Caco-2 (cell line): ENCODE measurements at regions of chr3 and their contacts with region 1.

Region 1: DNA sequence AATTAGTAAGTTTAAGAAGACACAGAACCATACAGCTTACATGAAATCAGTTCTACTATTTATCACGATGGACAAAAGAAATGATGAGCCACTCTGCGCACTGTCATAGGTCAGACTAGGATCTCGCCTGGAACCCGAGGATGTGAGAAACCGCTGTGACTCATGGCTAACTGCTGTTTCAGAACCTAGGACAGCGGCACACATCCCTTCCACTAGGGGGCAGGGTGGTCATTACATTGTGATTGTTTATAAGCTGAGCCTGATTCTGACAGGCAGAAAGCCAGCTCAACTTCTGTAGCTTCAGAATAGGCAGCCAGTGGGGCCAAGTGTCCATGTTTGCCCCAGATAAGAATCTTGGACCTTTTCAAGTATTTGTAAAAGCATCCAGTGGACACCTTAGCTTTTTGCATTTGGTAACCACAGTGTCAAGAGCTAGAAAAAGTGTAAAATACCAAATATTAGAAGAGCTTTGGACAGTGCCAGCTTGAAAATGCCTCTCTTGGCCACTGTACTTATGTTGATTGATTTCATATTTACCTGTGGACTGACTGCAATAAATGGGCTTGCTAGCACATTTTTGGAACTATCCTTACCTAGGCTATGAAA is 115.8 kb downstream of the KBTBD8 start:
- DNase-seq: peak; percentile 74 to 81
- H3K4me3 ChIP-seq: no peak overlapping the region
- H3K4me3 Mint-ChIP-seq: no peak overlapping the region
- H3K27ac Mint-ChIP-seq: no peak overlapping the region
- H3K4me1 ChIP-seq: no peaks in the 10 kb centered on the region
- H3K4me1 Mint-ChIP-seq: no peaks in the 10 kb centered on the region
- H3K27me3 ChIP-seq: no peaks in the 10 kb centered on the region
- H3K27me3 Mint-ChIP-seq: peaks cover 3% of the 10 kb centered on the region
- CTCF ChIP-seq: peak; percentile 81 to 97

Region 2: GRCh38 chr3:66938338-66938963 is 175.5 kb before region 1 on chr3:
- CTCF ChIA-PET with region 1: interaction called, 8 read pairs
- POLR2A ChIA-PET with region 1: no interaction called
- intact Hi-C with region 1: loop called (anchors 2 kb)
- DNase-seq: peak; percentile 57 to 68
- H3K4me3 ChIP-seq: no peak overlapping the region
- H3K4me3 Mint-ChIP-seq: no peak overlapping the region
- H3K27ac Mint-ChIP-seq: no peak overlapping the region
- H3K4me1 ChIP-seq: no peaks in the 10 kb centered on the region
- H3K4me1 Mint-ChIP-seq: no peaks in the 10 kb centered on the region
- H3K27me3 ChIP-seq: no peaks in the 10 kb centered on the region
- H3K27me3 Mint-ChIP-seq: peaks cover 6% of the 10 kb centered on the region
- CTCF ChIP-seq: peak; percentile 77 to 83

Region 3: DNA sequence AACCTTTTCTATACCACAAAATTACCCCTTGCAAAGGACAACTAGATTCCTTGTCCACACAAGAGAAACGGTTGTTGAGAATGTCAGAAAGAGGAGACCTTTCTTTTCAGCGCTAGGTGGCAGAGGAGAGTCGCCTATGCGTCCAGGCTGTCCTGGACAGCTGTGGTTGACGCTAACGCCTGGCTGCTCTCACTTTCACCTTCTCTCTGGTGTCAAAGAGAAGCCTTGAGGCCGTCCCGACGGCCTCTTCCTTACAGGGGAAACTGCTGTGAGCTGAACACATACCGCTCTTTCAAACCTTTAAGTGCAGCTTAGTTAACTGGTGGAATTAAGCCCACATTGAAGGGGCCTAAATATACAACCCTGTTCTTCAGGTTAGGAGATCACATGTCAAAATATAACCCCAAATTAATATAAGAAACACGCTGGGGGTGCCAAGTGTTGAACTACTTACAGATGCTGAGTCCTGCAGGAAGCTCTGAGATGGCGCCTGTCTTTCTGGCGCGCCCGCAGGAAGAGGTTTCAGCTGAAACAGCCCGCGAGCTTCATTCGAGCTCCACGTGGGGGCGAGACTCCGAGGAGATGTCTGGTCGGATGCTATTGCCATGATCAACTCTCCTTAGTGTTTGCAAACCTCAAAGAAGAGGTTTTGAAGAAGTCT is 141.9 kb before region 1 on chr3:
- CTCF ChIA-PET with region 1: interaction called, 4 read pairs
- POLR2A ChIA-PET with region 1: no interaction called
- intact Hi-C with region 1: loop called (anchors 1 kb)
- DNase-seq: peak; percentile 76 to 78
- H3K4me3 ChIP-seq: peak overlapping the region; percentile 18; the same call in 1 of the 2 replicates
- H3K4me3 Mint-ChIP-seq: peak overlapping the region; percentile 58
- H3K27ac Mint-ChIP-seq: no peak overlapping the region
- H3K4me1 ChIP-seq: peaks cover 6% of the 10 kb centered on the region; the same call in 1 of the 2 replicates
- H3K4me1 Mint-ChIP-seq: no peaks in the 10 kb centered on the region
- H3K27me3 ChIP-seq: no peaks in the 10 kb centered on the region
- H3K27me3 Mint-ChIP-seq: peaks cover 6% of the 10 kb centered on the region
- CTCF ChIP-seq: peak; percentile 70 to 83

Region 4: DNA sequence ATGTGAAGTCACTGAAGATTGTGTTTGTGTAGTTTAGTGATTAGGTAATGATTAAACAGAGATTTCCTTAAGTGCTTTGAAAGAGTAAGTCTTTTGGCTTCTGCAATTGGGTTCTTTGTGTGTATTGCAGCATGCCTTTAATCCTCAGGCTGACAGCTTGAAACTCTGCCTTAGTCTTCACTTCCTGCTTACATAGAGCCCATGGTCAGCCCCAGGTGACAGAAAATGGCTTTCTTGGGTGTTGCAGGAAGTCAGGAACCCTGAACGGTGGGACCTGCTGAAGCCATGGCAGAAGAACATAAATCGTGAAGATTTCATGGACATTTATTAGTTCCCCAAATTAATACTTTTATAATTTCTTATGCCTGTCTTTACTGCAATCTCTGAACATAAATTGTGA is 54.5 kb before region 1 on chr3:
- CTCF ChIA-PET with region 1: no interaction called
- POLR2A ChIA-PET with region 1: no interaction called
- intact Hi-C with region 1: no loop called
- DNase-seq: no peak
- H3K4me3 ChIP-seq: no peak overlapping the region
- H3K4me3 Mint-ChIP-seq: no peak overlapping the region
- H3K27ac Mint-ChIP-seq: no peak overlapping the region
- H3K4me1 ChIP-seq: no peaks in the 10 kb centered on the region
- H3K4me1 Mint-ChIP-seq: no peaks in the 10 kb centered on the region
- H3K27me3 ChIP-seq: no peaks in the 10 kb centered on the region
- H3K27me3 Mint-ChIP-seq: peaks cover 14% of the 10 kb centered on the region
- CTCF ChIP-seq: no peak

Region 5: GRCh38 chr3:67154429-67154828 is 40.5 kb after region 1 on chr3:
- CTCF ChIA-PET with region 1: no interaction called
- POLR2A ChIA-PET with region 1: no interaction called
- intact Hi-C with region 1: no loop called
- DNase-seq: no peak
- H3K4me3 ChIP-seq: no peak overlapping the region
- H3K4me3 Mint-ChIP-seq: no peak overlapping the region
- H3K27ac Mint-ChIP-seq: no peak overlapping the region
- H3K4me1 ChIP-seq: no peaks in the 10 kb centered on the region
- H3K4me1 Mint-ChIP-seq: no peaks in the 10 kb centered on the region
- H3K27me3 ChIP-seq: no peaks in the 10 kb centered on the region
- H3K27me3 Mint-ChIP-seq: peaks cover 14% of the 10 kb centered on the region
- CTCF ChIP-seq: no peak

Region 6: DNA sequence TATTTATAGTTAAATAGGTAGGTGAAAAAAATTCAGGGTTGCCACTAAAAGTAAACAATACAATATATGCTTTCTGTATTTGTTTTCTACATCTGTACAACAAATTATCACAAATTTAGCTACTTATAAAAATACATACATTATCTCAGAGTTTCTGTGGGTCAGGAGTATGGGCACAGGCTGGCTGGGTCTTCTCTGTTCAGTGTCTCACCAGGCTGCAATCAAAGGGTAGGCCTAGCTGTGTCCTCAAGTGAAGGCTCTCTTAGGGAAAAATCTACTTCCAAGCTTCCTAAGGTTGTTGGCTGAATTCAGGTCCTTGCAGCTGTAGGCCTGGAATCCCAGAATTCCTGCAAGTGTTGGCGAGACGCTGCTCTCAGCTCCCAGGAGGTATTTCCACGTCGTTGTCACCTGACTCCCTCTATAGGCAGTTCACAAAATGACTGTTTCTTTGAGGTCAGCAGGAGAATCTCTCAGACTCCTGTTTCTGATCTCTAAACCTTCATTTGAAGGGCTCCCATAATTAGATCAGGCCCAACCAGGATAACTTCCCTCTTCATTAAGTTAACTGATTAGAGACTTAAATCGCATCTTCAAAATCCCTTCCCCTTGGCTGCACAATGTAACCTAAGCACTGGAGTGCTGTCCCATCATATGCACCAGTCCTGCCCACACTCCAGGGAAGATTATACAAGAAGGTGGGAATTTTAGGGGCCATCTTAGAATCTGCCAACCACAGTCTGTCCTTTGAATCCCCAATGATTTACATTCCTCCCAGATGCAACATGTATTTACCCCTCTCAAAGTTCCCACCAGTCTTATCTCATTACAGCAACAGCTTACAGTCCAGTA is 243.9 kb after region 1 on chr3:
- CTCF ChIA-PET with region 1: interaction called, 22 read pairs
- POLR2A ChIA-PET with region 1: no interaction called
- intact Hi-C with region 1: loop called (anchors 1 kb)
- DNase-seq: peak; percentile 58 to 65
- H3K4me3 ChIP-seq: no peak overlapping the region
- H3K4me3 Mint-ChIP-seq: no peak overlapping the region
- H3K27ac Mint-ChIP-seq: no peak overlapping the region
- H3K4me1 ChIP-seq: no peaks in the 10 kb centered on the region; the same call in 1 of the 2 replicates
- H3K4me1 Mint-ChIP-seq: peaks cover 7% of the 10 kb centered on the region
- H3K27me3 ChIP-seq: no peaks in the 10 kb centered on the region
- H3K27me3 Mint-ChIP-seq: no peaks in the 10 kb centered on the region
- CTCF ChIP-seq: peak; percentile 64 to 76

Region 7: GRCh38 chr3:67790043-67790442 is 676.1 kb after region 1 on chr3:
- CTCF ChIA-PET with region 1: no interaction called
- POLR2A ChIA-PET with region 1: no interaction called
- intact Hi-C with region 1: loop called (anchors 5 kb)
- DNase-seq: peak; percentile 41 to 66
- H3K4me3 ChIP-seq: no peak overlapping the region
- H3K4me3 Mint-ChIP-seq: no peak overlapping the region
- H3K27ac Mint-ChIP-seq: no peak overlapping the region
- H3K4me1 ChIP-seq: no peaks in the 10 kb centered on the region
- H3K4me1 Mint-ChIP-seq: peaks cover 9% of the 10 kb centered on the region
- H3K27me3 ChIP-seq: no peaks in the 10 kb centered on the region
- H3K27me3 Mint-ChIP-seq: peaks cover 4% of the 10 kb centered on the region
- CTCF ChIP-seq: peak; percentile 62 to 65

Region 8: GRCh38 chr3:68876112-68876713 is 1762.3 kb after region 1 on chr3:
- CTCF ChIA-PET with region 1: no interaction called
- POLR2A ChIA-PET with region 1: no interaction called
- intact Hi-C with region 1: loop called (anchors 5 kb)
- DNase-seq: peak in 1 of 2 experiments; percentile 56
- H3K4me3 ChIP-seq: no peak overlapping the region
- H3K4me3 Mint-ChIP-seq: no peak overlapping the region
- H3K27ac Mint-ChIP-seq: no peak overlapping the region
- H3K4me1 ChIP-seq: no peaks in the 10 kb centered on the region
- H3K4me1 Mint-ChIP-seq: no peaks in the 10 kb centered on the region
- H3K27me3 ChIP-seq: no peaks in the 10 kb centered on the region; the same call in 1 of the 2 replicates
- H3K27me3 Mint-ChIP-seq: peaks cover 4% of the 10 kb centered on the region
- CTCF ChIP-seq: peak; percentile 79 to 84

Region 9: DNA sequence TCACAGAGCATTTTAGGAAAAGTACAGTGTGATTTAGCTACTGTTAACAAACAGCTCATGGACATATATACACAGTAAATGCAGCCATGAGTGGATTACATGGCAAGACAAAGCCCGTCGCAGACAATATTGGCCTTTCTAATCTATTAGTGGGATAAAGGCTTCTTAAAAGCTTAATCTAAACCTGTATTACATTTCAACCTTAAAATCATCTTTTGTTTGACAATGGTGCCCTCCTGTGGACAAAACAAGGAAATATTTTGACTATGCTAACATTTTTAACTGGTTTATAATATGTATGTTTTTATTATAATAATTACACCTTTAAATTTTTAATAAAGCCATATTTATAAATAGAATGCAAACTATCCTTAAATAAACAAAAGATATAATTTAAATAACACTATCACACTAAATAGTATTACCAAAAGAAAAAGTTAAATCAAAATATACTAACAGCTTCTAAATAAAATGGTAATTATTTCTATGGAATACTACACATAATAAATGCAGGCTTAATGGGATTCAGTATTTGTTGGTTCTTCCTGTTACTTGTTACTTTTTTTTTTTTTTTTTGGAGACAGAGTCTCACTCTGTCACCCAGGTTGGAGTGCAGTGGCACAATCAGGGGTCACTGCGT is 1779.8 kb after region 1 on chr3:
- CTCF ChIA-PET with region 1: interaction called, 5 read pairs
- POLR2A ChIA-PET with region 1: no interaction called
- intact Hi-C with region 1: loop called (anchors 5 kb)
- DNase-seq: peak in 1 of 2 experiments; percentile 10
- H3K4me3 ChIP-seq: no peak overlapping the region
- H3K4me3 Mint-ChIP-seq: no peak overlapping the region
- H3K27ac Mint-ChIP-seq: no peak overlapping the region
- H3K4me1 ChIP-seq: no peaks in the 10 kb centered on the region
- H3K4me1 Mint-ChIP-seq: no peaks in the 10 kb centered on the region
- H3K27me3 ChIP-seq: no peaks in the 10 kb centered on the region
- H3K27me3 Mint-ChIP-seq: peaks cover 20% of the 10 kb centered on the region
- CTCF ChIP-seq: peak; percentile 23 to 35